H1 (cell line): ENCODE measurements at regions of chr20 and their contacts with region 1.

Region 1: GRCh38 chr20:62500237-62500864 is 24.6 kb upstream of the GATA5 start:
- DNase-seq: peak in 1 of 2 experiments; percentile 93
- H3K4me3 ChIP-seq: no peak overlapping the region
- H3K27ac ChIP-seq: no peak overlapping the region
- H3K4me1 ChIP-seq: peaks cover 0 to 12% (median 3%) of the 10 kb centered on the region in 4 experiments; a peak in 4 of 7 replicates
- H3K27me3 ChIP-seq: peaks cover 0 to 5% (median 2%) of the 10 kb centered on the region in 4 experiments; a peak in 2 of 7 replicates
- CTCF ChIP-seq: peak; percentile 79 to 93 (median 89)
- EP300 ChIP-seq: no peak
- POLR2A ChIP-seq: no peak
- RAD21 ChIP-seq: peak; percentile 83 to 92

Region 2: GRCh38 chr20:62427172-62428001 is 73.0 kb before region 1 on chr20 and contains the start of gene RBBP8NL:
- CTCF ChIA-PET with region 1: interaction called, 10 read pairs
- POLR2A ChIA-PET with region 1: no interaction called
- DNase-seq: peak in 1 of 2 experiments; percentile 88
- H3K4me3 ChIP-seq: peak within 1 kb of the TSS in 3 of 4 experiments; percentile 22 to 36 (median 28); a peak in 5 of 8 replicates
- H3K27ac ChIP-seq: peak within 1 kb of the TSS; percentile 58
- H3K4me1 ChIP-seq: peaks cover 0 to 43% (median 31%) of the 10 kb centered on the region in 4 experiments; a peak in 6 of 7 replicates
- H3K27me3 ChIP-seq: no peaks in the 10 kb centered on the region; a peak in 1 of 7 replicates
- CTCF ChIP-seq: peak in 2 of 3 experiments; percentile 48 to 60; a peak in 3 of 4 replicates
- EP300 ChIP-seq: 0 out of 3 replicates have a peak, but pooled peaks of 1 of the 2 experiments have one; percentile 60
- POLR2A ChIP-seq: no peak
- RAD21 ChIP-seq: peak; percentile 44 to 63; a peak in 3 of 4 replicates
- total RNA-seq, gene RBBP8NL: 0.43 and 0.59 TPM in 2 replicates

Region 3: GRCh38 chr20:62487561-62488306 is 12.6 kb before region 1 on chr20:
- CTCF ChIA-PET with region 1: interaction called, 68 read pairs
- POLR2A ChIA-PET with region 1: interaction called, 3 read pairs
- DNase-seq: no peak
- H3K4me3 ChIP-seq: no peak overlapping the region
- H3K27ac ChIP-seq: no peak overlapping the region
- H3K4me1 ChIP-seq: peaks cover 0 to 24% (median 17%) of the 10 kb centered on the region in 4 experiments; a peak in 6 of 7 replicates
- H3K27me3 ChIP-seq: peaks cover 2 to 29% (median 25%) of the 10 kb centered on the region in 4 experiments
- CTCF ChIP-seq: no peak
- EP300 ChIP-seq: no peak
- POLR2A ChIP-seq: no peak
- RAD21 ChIP-seq: no peak

Region 4: GRCh38 chr20:62539198-62540045 is 39.1 kb after region 1 on chr20:
- CTCF ChIA-PET with region 1: interaction called, 11 read pairs
- POLR2A ChIA-PET with region 1: no interaction called
- DNase-seq: no peak
- H3K4me3 ChIP-seq: no peak overlapping the region
- H3K27ac ChIP-seq: no peak overlapping the region
- H3K4me1 ChIP-seq: no peaks in the 10 kb centered on the region
- H3K27me3 ChIP-seq: no peaks in the 10 kb centered on the region; a peak in 1 of 7 replicates
- CTCF ChIP-seq: no peak
- EP300 ChIP-seq: no peak
- POLR2A ChIP-seq: no peak
- RAD21 ChIP-seq: no peak

Region 5: GRCh38 chr20:62583420-62583920 is 83.1 kb after region 1 on chr20:
- CTCF ChIA-PET with region 1: interaction called, 13 read pairs
- POLR2A ChIA-PET with region 1: no interaction called
- DNase-seq: no peak
- H3K4me3 ChIP-seq: no peak overlapping the region
- H3K27ac ChIP-seq: no peak overlapping the region
- H3K4me1 ChIP-seq: peaks cover 0 to 9% (median 1%) of the 10 kb centered on the region in 4 experiments; a peak in 5 of 7 replicates
- H3K27me3 ChIP-seq: no peaks in the 10 kb centered on the region
- CTCF ChIP-seq: peak in 2 of 3 experiments; percentile 24 to 26; a peak in 2 of 4 replicates
- EP300 ChIP-seq: no peak
- POLR2A ChIP-seq: no peak
- RAD21 ChIP-seq: peak; percentile 20 to 47; a peak in 2 of 4 replicates